ENCODE measurements at regions of chr10 and their contacts with region 1.

Region 1: GRCh38 chr10:100338434-100339036 is 8.5 kb upstream of the SCD start:
- DNase-seq: peak; percentile 56 to 90 (median 82)
- ATAC-seq: peak; percentile 79 to 93 (median 88)
- H3K4me3 ChIP-seq: no peak overlapping the region
- H3K27ac ChIP-seq: no peak overlapping the region
- H3K4me1 ChIP-seq: no peaks in the 10 kb centered on the region
- H3K27me3 ChIP-seq: peaks cover 0 to 6% (median 0%) of the 10 kb centered on the region in 4 donors
- CTCF ChIP-seq: peak; percentile 66 to 86 (median 78)

Region 2: GRCh38 chr10:99341860-99342490 is 996.6 kb before region 1 on chr10:
- intact Hi-C with region 1: no loop called
- DNase-seq: no peak
- ATAC-seq: peak in 3 of 4 donors; percentile 47 to 80 (median 64)
- H3K4me3 ChIP-seq: no peak overlapping the region
- H3K27ac ChIP-seq: no peak overlapping the region
- H3K4me1 ChIP-seq: no peaks in the 10 kb centered on the region
- H3K27me3 ChIP-seq: no peaks in the 10 kb centered on the region
- CTCF ChIP-seq: no peak

Region 3: DNA sequence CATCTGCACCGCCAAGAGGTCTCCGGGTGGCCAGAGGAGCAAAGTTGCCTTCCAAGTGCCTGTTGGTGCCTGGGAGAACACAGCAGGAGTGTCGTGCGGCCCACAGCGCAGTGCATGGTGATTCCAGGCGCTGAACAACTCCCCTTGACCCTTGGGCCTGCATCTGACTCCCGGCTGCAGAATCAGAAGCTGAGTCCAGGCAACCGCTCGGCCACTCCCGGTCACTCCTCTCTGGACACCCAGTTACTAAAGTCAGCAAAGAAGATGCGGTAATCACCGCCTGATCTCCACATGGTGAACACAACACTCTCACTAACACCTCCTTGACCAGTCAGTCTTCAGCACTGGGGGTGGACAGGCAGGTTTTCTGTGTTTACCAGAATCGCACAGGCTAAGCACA is 44.0 kb after region 1 on chr10:
- intact Hi-C with region 1: loop called in 1 of 3 experiments (anchors 5 kb)
- DNase-seq: no peak
- ATAC-seq: no peak
- H3K4me3 ChIP-seq: no peak overlapping the region
- H3K27ac ChIP-seq: no peak overlapping the region
- H3K4me1 ChIP-seq: no peaks in the 10 kb centered on the region
- H3K27me3 ChIP-seq: no peaks in the 10 kb centered on the region
- CTCF ChIP-seq: no peak

Region 4: GRCh38 chr10:100433253-100434240 is 95.0 kb after region 1 on chr10:
- intact Hi-C with region 1: loop called in 2 of 3 experiments (anchors 2 to 10 kb)
- DNase-seq: peak; percentile 85 to 98 (median 94)
- ATAC-seq: peak; percentile 95 to 100 (median 98)
- H3K4me3 ChIP-seq: no peak overlapping the region
- H3K27ac ChIP-seq: no peak overlapping the region
- H3K4me1 ChIP-seq: no peaks in the 10 kb centered on the region
- H3K27me3 ChIP-seq: peaks cover 0 to 5% (median 0%) of the 10 kb centered on the region in 4 donors
- CTCF ChIP-seq: peak; percentile 95 to 99 (median 98)

Region 5: GRCh38 chr10:100518761-100519241 is 180.3 kb after region 1 on chr10:
- intact Hi-C with region 1: loop called in 2 of 3 experiments (anchors 5 to 10 kb)
- DNase-seq: peak in 5 of 6 donors; percentile 44 to 76 (median 65)
- ATAC-seq: peak; percentile 77 to 93 (median 89)
- H3K4me3 ChIP-seq: peak overlapping the region in 2 of 4 donors; percentile 6 to 48
- H3K27ac ChIP-seq: no peak overlapping the region
- H3K4me1 ChIP-seq: peaks cover 7 to 11% (median 7%) of the 10 kb centered on the region in 3 donors
- H3K27me3 ChIP-seq: no peaks in the 10 kb centered on the region
- CTCF ChIP-seq: peak in 3 of 4 donors; percentile 51 to 70 (median 67)

Region 6: DNA sequence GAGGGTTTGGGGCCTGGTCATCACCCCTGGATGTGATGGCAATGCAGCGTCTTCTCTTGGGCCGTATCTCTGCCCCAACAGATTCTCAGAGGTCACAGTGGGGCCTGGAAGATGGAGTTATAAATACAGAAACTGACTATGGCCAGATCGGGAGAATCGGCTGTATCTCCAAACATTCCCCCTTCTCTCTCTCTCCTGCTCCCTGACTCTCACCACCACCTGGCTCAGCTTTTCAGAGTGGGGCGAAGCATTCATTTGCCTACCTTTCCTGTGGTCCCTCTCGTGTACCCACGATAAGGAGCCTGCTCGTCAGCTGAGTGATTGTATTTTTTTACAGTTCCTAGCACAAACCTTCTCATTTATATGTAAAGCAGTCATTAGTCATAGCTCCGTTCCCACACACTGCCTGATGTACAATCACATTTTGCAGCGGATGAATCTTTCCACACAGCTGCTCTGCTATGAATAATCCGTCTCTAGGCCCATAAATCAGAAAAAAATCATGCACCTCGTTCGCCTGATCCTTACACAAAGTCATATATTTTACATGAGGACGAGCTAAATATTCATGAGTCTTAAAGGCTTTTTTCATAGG is 992.2 kb after region 1 on chr10:
- intact Hi-C with region 1: no loop called
- DNase-seq: no peak
- ATAC-seq: no peak
- H3K4me3 ChIP-seq: no peak overlapping the region
- H3K27ac ChIP-seq: no peak overlapping the region
- H3K4me1 ChIP-seq: no peaks in the 10 kb centered on the region
- H3K27me3 ChIP-seq: no peaks in the 10 kb centered on the region
- CTCF ChIP-seq: no peak